ENCODE measurements at regions of chr14 and their contacts with region 1.

Region 1: DNA sequence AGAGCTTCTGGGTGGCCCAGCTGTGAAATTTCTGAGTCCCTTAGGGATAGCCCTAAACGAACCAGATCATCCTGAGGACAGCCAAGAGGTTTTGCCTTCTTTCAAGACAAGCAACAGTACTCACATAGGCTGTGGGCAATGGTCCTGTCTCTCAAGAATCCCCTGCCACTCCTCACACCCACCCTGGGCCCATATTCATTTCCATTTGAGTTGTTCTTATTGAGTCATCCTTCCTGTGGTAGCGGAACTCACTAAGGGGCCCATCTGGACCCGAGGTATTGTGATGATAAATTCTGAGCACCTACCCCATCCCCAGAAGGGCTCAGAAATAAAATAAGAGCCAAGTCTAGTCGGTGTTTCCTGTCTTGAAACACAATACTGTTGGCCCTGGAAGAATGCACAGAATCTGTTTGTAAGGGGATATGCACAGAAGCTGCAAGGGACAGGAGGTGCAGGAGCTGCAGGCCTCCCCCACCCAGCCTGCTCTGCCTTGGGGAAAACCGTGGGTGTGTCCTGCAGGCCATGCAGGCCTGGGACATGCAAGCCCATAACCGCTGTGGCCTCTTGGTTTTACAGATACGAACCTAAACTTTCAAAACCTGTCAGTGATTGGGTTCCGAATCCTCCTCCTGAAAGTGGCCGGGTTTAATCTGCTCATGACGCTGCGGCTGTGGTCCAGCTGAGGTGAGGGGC is 38.9 kb downstream of the DAD1 start:
- DNase-seq: peak; percentile 87
- ATAC-seq: peak; percentile 85
- H3K4me3 ChIP-seq: no peak overlapping the region; the same call in 1 of the 2 replicates
- H3K27ac ChIP-seq: peak overlapping the region; percentile 97
- H3K4me1 ChIP-seq: peaks cover 61% of the 10 kb centered on the region
- H3K27me3 ChIP-seq: no peaks in the 10 kb centered on the region
- CTCF ChIP-seq: no peak
- EP300 ChIP-seq: peak; percentile 60 to 82; a peak in 2 of 4 replicates
- POLR2A ChIP-seq: peak; percentile 53; the same call in 1 of the 2 replicates
- RAD21 ChIP-seq: no peak; the same call in 1 of the 2 replicates

Region 2: DNA sequence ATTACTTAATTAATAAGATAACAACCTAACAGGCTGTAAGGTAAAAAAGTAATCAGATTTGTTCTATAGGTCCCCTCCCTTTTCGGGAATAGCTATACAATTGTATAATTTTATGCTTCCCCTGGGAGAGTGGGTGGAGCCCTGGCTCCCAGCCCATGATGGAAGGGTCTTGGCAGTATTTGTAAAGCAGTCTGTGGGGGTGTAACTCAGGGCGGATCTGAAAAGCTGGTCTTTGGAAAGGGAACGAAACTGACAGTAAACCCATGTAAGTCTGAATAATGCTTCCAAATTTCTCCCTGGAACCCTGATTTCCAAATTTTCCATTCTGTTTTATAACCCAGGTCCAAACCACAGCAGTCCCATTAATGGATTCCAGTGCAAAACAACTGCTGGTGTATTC is 71.5 kb before region 1 on chr14:
- CTCF ChIA-PET with region 1: interaction called, 71 read pairs
- POLR2A ChIA-PET with region 1: interaction called, 36 read pairs
- RAD21 ChIA-PET with region 1: interaction called, 50 read pairs
- SMC1A ChIA-PET with region 1: interaction called, 49 read pairs
- in situ Hi-C with region 1: no loop called
- intact Hi-C with region 1: no loop called
- DNase-seq: no peak
- ATAC-seq: peak; percentile 5; the same call in 1 of the 3 replicates
- H3K4me3 ChIP-seq: peak overlapping the region; percentile 66; the same call in 1 of the 2 replicates
- H3K27ac ChIP-seq: peak overlapping the region; percentile 98
- H3K4me1 ChIP-seq: peaks cover 71% of the 10 kb centered on the region
- H3K27me3 ChIP-seq: no peaks in the 10 kb centered on the region
- CTCF ChIP-seq: no peak
- EP300 ChIP-seq: 0 out of 4 replicates have a peak, but pooled peaks of 1 of the 2 experiments have one; percentile 1
- POLR2A ChIP-seq: no peak
- RAD21 ChIP-seq: no peak

Region 3: GRCh38 chr14:22491683-22492621 is 58.2 kb before region 1 on chr14:
- CTCF ChIA-PET with region 1: interaction called, 6 read pairs
- POLR2A ChIA-PET with region 1: interaction called, 16 read pairs
- RAD21 ChIA-PET with region 1: interaction called, 37 read pairs
- SMC1A ChIA-PET with region 1: interaction called, 40 read pairs
- in situ Hi-C with region 1: no loop called
- intact Hi-C with region 1: no loop called
- DNase-seq: no peak
- ATAC-seq: peak; percentile 57
- H3K4me3 ChIP-seq: peak overlapping the region; percentile 45
- H3K27ac ChIP-seq: peak overlapping the region; percentile 98
- H3K4me1 ChIP-seq: peaks cover 86% of the 10 kb centered on the region
- H3K27me3 ChIP-seq: no peaks in the 10 kb centered on the region
- CTCF ChIP-seq: no peak
- EP300 ChIP-seq: peak; percentile 69 to 92; a peak in 3 of 4 replicates
- POLR2A ChIP-seq: peak; percentile 68
- RAD21 ChIP-seq: peak; percentile 26; the same call in 1 of the 2 replicates

Region 4: GRCh38 chr14:22497144-22497423 is 53.0 kb before region 1 on chr14:
- CTCF ChIA-PET with region 1: interaction called, 3 read pairs
- POLR2A ChIA-PET with region 1: interaction called, 11 read pairs
- RAD21 ChIA-PET with region 1: interaction called, 37 read pairs
- SMC1A ChIA-PET with region 1: interaction called, 40 read pairs
- in situ Hi-C with region 1: no loop called
- intact Hi-C with region 1: no loop called
- DNase-seq: no peak
- ATAC-seq: peak; percentile 18
- H3K4me3 ChIP-seq: 0 out of 2 replicates have a peak overlapping the region, but pooled peaks have one; percentile 35
- H3K27ac ChIP-seq: peak overlapping the region; percentile 65
- H3K4me1 ChIP-seq: peaks cover 62% of the 10 kb centered on the region
- H3K27me3 ChIP-seq: no peaks in the 10 kb centered on the region
- CTCF ChIP-seq: no peak
- EP300 ChIP-seq: no peak
- POLR2A ChIP-seq: no peak
- RAD21 ChIP-seq: no peak

Region 5: DNA sequence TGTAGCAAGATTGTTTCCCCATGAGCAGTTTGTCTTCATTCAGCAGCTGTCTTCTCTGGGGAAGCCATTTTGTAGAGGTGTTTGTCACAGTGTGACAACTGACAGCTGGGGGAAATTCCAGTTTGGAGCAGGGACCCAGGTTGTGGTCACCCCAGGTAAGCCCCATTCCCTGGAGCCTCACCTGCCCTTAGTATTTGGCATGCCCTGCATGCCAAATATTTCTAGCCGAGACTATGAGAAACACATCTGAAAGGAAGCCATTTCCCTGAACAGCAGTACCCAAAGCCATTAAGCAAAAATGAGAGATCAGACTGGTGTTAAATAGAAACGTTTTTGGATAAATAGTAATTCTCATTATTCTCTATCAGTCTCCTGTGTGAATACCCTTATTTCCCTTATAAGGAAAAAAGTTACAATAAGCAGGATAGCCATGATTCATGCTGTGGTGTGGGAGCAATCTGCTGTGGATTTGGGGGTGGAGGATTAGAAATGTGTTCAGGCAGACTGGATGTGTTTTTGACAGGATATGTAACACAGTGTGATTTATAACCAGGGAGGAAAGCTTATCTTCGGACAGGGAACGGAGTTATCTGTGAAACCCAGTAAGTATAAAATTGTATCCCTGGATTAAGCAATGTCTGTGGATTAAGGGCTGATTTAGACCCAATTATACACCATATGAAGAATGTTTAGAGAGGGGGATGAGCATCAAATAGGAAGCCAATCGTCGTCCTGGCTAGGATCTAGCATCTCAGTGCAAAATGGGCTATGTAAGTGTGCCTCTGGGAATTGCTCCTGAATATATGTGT is 30.0 kb before region 1 on chr14:
- CTCF ChIA-PET with region 1: interaction called, 3 read pairs
- POLR2A ChIA-PET with region 1: interaction called, 8 read pairs
- RAD21 ChIA-PET with region 1: interaction called, 20 read pairs
- SMC1A ChIA-PET with region 1: interaction called, 44 read pairs
- in situ Hi-C with region 1: no loop called
- intact Hi-C with region 1: no loop called
- DNase-seq: no peak
- ATAC-seq: no peak
- H3K4me3 ChIP-seq: peak overlapping the region; percentile 15; the same call in 1 of the 2 replicates
- H3K27ac ChIP-seq: peak overlapping the region; percentile 80
- H3K4me1 ChIP-seq: peaks cover 99% of the 10 kb centered on the region
- H3K27me3 ChIP-seq: no peaks in the 10 kb centered on the region
- CTCF ChIP-seq: no peak
- EP300 ChIP-seq: no peak
- POLR2A ChIP-seq: no peak
- RAD21 ChIP-seq: no peak

Measured in GM12878 (cell line).